ENCODE measurements at regions of chr6 and their contacts with region 1.

Region 1: DNA sequence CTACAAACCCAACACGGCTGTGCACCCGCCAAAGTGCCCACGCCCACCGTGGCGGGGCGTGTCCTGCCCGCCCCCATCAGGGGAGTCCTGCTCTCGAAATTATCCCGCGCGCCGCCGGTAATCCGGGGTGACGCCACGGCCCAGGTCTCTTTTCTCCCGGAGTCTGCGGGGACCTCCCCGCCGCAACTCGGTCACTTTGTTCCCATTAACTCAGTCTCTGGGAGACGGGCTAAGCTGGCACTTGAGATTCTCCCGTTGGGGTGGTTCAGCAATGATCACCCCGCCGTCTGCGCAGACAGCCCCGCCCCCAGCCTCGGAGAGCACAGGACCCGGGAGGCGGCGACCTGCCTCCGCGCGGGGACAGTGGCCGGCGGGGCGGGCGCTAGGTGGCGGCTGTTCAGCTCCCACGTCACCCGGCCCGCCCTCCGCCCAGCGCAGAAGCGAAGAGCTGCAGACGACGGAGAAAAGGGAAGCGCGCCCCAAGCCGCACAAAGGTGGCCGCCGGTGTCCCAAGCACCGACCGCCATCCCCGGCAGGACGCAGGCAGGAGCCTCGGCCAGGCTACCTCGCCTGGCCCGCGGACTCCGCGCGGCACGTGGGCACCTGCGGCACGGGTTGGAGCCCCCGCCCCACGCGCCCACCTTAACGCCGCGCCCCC is 31.5 kb downstream of the SF3B5 start:
- DNase-seq: peak; percentile 84 to 94 (median 89)
- ATAC-seq: peak; percentile 88 to 90
- H3K4me3 Mint-ChIP-seq: peak overlapping the region; percentile 86 to 96 (median 93)
- H3K27ac Mint-ChIP-seq: peak overlapping the region; percentile 72 to 98 (median 95)
- H3K4me1 Mint-ChIP-seq: peaks cover 14 to 34% (median 25%) of the 10 kb centered on the region in 4 donors
- H3K27me3 Mint-ChIP-seq: no peaks in the 10 kb centered on the region

Region 2: DNA sequence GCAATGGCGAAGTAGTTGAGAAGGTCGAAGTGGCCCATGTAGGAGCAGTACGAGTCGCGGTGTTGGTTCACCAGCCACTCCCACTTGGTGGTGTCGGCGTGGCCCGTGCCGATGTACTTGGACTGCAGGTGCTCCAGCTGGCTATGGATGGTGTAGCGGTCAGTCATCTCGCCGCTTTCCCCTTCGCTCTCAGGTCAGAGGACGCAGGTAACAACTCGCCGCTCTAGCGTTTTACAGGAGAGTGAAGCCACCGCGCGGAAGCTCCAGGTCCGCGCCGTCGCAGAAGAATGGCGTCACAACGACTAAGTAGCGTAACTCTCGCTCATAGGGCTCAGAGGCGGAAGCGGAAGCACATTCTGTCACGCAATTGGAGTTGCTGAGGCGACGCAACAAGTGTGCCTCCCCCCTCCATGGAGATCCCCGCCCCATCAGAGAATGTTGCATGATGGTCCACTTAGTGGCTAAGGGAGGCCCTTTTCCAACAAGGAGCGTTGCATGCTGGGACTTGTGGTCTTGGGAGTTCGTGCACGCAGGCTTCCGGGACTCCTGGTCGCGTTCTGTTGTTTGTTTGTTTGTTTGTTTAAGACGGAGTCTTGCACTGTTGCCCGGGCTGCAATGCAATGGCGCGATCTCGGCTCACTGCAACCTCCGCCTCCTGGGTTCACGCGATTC is 31.6 kb after region 1 on chr6 and contains the start of gene SF3B5:
- POLR2A ChIA-PET with region 1: interaction called, 50 read pairs
- DNase-seq: peak; percentile 86 to 99 (median 97)
- ATAC-seq: peak; percentile 93 to 96
- H3K4me3 Mint-ChIP-seq: peak within 1 kb of the TSS; percentile 91 to 99 (median 98)
- H3K27ac Mint-ChIP-seq: peak within 1 kb of the TSS; percentile 93 to 99 (median 98)
- H3K4me1 Mint-ChIP-seq: peaks cover 11 to 31% (median 25%) of the 10 kb centered on the region in 4 donors
- H3K27me3 Mint-ChIP-seq: no peaks in the 10 kb centered on the region
- polyA plus RNA-seq, gene SF3B5: 390 to 417 (median 416) TPM

Region 3: DNA sequence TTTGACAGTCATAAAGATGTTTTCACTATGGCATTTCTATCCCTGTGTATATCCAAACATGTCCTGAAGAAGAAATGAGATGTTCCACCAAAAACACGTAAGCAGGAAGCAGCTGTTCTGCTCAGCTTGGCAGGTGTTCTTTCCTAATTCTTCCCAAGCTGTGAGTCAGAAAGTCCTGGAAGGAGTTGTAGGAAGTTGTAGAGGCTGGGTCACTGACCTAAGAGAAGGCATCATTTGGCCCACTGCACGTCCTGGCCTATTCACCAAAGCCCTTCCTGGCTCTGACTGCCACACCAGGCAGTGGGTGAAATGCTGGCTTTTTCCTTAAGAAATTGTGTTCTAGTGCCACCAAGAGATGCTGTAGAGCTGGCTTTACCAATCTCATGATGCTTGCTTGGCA is 126.7 kb after region 1 on chr6:
- POLR2A ChIA-PET with region 1: no interaction called
- DNase-seq: no peak
- ATAC-seq: no peak
- H3K4me3 Mint-ChIP-seq: no peak overlapping the region
- H3K27ac Mint-ChIP-seq: no peak overlapping the region
- H3K4me1 Mint-ChIP-seq: no peaks in the 10 kb centered on the region
- H3K27me3 Mint-ChIP-seq: peaks cover 0 to 2% (median 0%) of the 10 kb centered on the region in 5 donors

Measured in naive thymus-derived CD8-positive, alpha-beta T cell (primary cell).